Sciatic nerve (tissue), 2 donors: ENCODE measurements at regions of chr4 and their contacts with region 1.

Region 1: DNA sequence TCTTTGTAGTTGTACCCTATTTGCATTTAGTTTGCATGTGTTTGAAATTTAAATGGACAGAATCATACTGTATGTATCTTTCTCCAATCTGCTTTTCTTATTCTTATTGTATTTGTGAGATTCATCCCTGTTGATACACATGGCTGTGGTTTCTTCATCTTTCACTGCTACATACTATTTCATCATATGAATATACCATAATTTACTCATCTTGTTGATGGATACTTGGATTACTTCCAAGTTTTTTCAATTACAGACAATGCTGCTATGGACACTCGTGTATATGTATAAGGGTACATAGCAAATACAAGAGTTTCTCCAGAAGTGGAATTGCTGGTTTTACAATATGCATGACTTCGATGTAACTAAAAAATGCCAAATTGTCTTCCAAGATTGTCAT is 11.8 kb upstream of the KLHL8 start:
- DNase-seq: no peak
- ATAC-seq: no peak

Region 2: DNA sequence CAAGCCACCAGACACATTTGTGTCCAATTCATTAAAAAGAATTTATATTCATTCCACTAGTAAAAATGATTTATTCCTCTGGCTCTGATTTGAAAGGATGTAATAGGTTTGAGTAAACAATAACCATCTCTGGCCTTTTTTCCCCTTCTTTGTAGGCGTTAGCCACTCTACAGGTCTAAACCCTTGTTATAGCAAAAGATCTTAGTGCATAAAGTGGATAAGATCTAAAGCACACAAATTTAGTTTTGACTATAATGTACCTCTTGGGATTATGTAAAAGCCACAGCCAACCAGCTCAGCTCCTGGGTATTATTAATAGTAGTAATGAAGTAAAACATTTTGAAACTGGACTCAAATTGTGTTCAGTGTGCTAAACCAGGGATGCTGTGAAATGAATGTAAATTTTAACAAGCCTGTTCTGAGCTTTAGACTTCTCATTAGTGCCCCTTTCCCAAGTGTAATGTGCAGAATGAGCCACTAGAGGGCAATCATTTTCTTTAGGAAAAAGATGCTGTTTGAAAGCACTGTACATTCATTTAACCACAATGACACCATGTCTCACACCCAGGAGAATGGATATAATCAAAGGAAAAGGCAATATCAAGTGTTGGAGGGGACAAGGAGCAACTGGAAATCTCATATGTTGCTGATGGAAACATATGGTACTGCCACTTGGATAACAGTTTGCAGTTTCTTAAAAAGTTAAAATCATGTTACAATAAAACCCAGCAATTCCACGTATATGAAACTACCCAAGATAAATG is 81.5 kb before region 1 on chr4:
- intact Hi-C with region 1: loop called (anchors 5 kb)
- DNase-seq: no peak
- ATAC-seq: peak; percentile 69

Region 3: DNA sequence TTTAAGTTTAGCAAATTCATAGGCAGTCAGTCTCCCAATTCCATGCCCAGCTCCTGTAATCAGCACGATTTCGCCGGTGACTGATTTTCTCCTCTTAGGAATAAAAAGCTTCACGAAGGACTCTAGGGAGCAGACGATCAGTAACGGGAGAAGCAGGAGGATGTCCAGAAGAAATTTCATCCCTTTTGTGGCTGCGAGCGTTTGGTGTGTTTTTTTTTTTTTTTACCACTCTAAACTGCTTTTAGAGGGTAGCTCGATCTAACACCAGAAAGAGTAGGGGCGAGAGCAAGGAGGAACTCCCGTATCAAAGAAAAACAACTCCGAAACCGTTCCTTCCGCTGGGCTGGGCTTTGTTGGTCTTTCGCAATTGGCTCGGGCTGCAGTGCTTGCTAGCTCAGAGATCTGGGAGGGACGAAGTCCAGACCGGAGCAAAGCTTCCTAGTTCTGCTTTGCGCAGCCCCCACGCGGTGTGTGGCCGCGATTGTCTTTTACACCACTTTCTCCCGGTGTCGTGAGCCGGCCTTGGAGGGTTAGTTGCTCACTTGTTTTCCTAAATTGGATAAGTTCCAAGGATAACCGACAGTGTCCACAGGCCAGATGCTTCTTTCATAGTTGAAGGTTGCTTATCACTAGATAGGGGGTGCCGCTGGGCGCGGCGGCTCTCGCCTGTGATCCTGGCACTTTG is 158.8 kb after region 1 on chr4 and contains the start of gene HSD17B11:
- intact Hi-C with region 1: no loop called
- DNase-seq: peak; percentile 92
- ATAC-seq: peak; percentile 99
- total RNA-seq, gene HSD17B11: 66.1 TPM